ENCODE measurements at regions of chr12 and their contacts with region 1.

Region 1: DNA sequence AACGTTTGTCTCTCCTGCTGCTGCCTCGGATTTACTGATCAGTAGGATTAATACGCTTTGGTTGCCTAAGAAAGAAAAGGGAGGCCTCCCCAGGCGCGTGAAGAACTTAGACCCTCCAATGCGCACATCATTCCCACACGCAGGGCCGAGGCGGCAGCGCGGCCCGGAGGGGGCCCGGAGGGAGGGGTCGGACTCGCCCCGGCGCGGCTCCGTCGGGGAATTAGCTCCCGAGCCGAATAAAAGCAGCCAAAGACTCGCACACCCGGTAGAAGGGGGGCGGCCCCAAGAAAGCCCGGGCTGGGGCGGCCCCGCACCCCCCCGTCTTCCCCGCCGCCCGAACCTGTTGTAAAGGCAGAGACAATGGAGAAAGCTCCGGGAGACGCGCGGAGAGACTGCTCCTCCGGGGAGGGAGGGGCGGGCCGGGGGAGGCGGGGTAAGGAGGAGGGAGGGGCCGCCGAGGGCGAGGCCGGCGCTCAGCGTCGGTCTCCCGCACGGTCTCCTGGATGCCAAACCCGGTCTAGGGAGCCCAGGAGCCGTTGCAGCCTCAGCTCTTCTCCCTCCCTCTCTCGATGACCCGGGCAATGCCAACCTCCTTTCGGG is at the start of gene NELL2:
- DNase-seq: peak; percentile 42 to 79 (median 62)
- ATAC-seq: peak; percentile 70
- H3K4me3 ChIP-seq: peak within 1 kb of the TSS; percentile 82
- H3K4me3 Mint-ChIP-seq: peak within 1 kb of the TSS; percentile 98
- H3K27ac ChIP-seq: peak within 1 kb of the TSS; percentile 1 to 14
- H3K27ac Mint-ChIP-seq: peak within 1 kb of the TSS; percentile 77
- H3K4me1 ChIP-seq: peaks cover 24% of the 10 kb centered on the region
- H3K4me1 Mint-ChIP-seq: peaks cover 44% of the 10 kb centered on the region
- H3K27me3 ChIP-seq: peaks cover 8 to 9% of the 10 kb centered on the region in 2 experiments
- H3K27me3 Mint-ChIP-seq: peaks cover 18% of the 10 kb centered on the region
- CTCF ChIP-seq: no peak
- total RNA-seq, gene NELL2: 142 to 147 TPM

Region 2: GRCh38 chr12:44488180-44488579 is 387.9 kb before region 1 on chr12:
- CTCF ChIA-PET with region 1: no interaction called
- POLR2A ChIA-PET with region 1: no interaction called
- intact Hi-C with region 1: no loop called
- DNase-seq: no peak
- ATAC-seq: no peak
- H3K4me3 ChIP-seq: no peak overlapping the region
- H3K4me3 Mint-ChIP-seq: no peak overlapping the region
- H3K27ac ChIP-seq: no peak overlapping the region
- H3K27ac Mint-ChIP-seq: no peak overlapping the region
- H3K4me1 ChIP-seq: no peaks in the 10 kb centered on the region
- H3K4me1 Mint-ChIP-seq: no peaks in the 10 kb centered on the region
- H3K27me3 ChIP-seq: no peaks in the 10 kb centered on the region
- H3K27me3 Mint-ChIP-seq: peaks cover 24% of the 10 kb centered on the region
- CTCF ChIP-seq: no peak

Region 3: DNA sequence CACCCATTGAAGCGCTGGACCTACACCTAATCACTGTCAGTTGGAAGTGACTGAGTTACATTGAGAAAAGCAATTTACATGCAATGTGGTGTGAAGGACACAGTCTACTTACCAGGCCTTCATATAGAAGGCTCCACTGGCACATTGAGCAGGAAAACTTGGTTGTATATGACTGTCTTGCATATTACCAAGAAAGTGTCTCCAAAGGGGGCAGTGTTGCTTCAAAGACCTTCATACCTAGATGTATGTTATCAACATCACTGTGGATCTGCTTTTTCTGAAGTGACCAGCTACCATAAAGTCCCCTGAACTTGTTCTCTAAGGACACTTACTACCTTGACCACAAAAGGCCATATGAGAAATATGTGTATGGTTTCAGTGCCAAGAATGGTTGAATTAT is 64.0 kb before region 1 on chr12:
- CTCF ChIA-PET with region 1: interaction called, 81 read pairs
- POLR2A ChIA-PET with region 1: interaction called, 42 read pairs
- intact Hi-C with region 1: loop called (anchors 1 to 2 kb)
- DNase-seq: peak in 10 of 14 experiments; percentile 14 to 81 (median 38)
- ATAC-seq: peak; percentile 86
- H3K4me3 ChIP-seq: no peak overlapping the region
- H3K4me3 Mint-ChIP-seq: no peak overlapping the region
- H3K27ac ChIP-seq: no peak overlapping the region
- H3K27ac Mint-ChIP-seq: no peak overlapping the region
- H3K4me1 ChIP-seq: peaks cover 7% of the 10 kb centered on the region
- H3K4me1 Mint-ChIP-seq: peaks cover 47% of the 10 kb centered on the region
- H3K27me3 ChIP-seq: no peaks in the 10 kb centered on the region
- H3K27me3 Mint-ChIP-seq: no peaks in the 10 kb centered on the region
- CTCF ChIP-seq: peak; percentile 68

Region 4: DNA sequence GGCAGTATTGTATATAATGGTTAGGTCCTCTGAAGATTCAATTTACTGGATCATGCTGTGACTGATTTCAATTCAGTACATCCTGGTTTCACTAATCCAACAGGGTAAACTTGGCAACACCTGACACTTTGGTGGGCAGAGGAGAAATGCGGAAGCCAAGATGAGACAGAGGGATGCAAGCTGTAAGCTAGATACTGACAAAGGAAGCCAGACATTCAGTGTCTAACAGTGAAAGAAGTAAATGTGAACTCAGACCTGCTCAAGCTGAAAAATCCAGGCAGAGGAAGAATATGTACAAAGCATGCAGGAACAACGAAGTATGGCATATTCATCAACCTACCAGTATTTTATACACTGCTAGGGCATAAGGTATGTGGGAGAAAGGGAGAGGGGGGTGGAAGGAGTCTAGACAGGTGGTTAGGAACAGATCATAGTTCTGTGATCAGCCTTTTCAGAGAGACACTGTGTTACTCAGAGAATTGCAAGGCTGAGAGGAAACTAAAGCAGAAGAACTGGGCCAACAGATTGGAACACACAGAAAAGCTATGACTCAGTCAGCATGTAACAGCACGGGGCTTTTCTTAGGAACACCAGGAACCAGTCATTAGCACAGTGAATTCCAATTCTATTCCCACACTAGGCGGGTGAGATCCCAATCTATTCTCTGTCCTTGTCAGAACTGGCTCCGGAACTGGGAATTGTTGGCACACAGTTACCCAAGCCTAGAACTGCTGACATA is 40.2 kb before region 1 on chr12:
- CTCF ChIA-PET with region 1: interaction called, 24 read pairs
- POLR2A ChIA-PET with region 1: interaction called, 7 read pairs
- intact Hi-C with region 1: no loop called
- DNase-seq: peak in 5 of 14 experiments; percentile 16 to 54 (median 43)
- ATAC-seq: peak; percentile 94
- H3K4me3 ChIP-seq: peak overlapping the region; percentile 9
- H3K4me3 Mint-ChIP-seq: peak overlapping the region; percentile 57
- H3K27ac ChIP-seq: peak overlapping the region; percentile 56 to 59
- H3K27ac Mint-ChIP-seq: peak overlapping the region; percentile 91
- H3K4me1 ChIP-seq: peaks cover 37% of the 10 kb centered on the region
- H3K4me1 Mint-ChIP-seq: peaks cover 82% of the 10 kb centered on the region
- H3K27me3 ChIP-seq: no peaks in the 10 kb centered on the region
- H3K27me3 Mint-ChIP-seq: no peaks in the 10 kb centered on the region
- CTCF ChIP-seq: no peak

Region 5: DNA sequence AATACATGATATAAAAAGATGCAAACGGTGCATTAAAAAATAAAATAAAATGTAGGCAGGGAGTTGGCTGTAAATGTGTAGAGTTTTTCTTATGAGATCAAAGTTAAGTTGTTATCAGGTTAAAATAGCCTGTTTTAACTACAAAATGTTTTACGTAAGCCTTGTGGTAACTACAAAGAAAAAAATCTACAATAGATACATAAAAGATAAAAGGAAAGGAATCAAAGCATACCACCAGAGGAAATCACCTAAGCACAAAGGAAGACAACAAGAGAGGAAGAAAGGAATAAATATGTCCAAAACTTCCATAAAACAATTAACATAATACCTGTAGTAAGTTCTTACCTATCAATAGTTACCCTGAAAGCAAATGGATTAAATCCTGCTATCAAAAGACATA is 12.2 kb before region 1 on chr12:
- CTCF ChIA-PET with region 1: interaction called, 5 read pairs
- POLR2A ChIA-PET with region 1: interaction called, 40 read pairs
- intact Hi-C with region 1: no loop called
- DNase-seq: peak in 3 of 14 experiments; percentile 57 to 78 (median 68)
- ATAC-seq: peak; percentile 82
- H3K4me3 ChIP-seq: no peak overlapping the region
- H3K4me3 Mint-ChIP-seq: peak overlapping the region; percentile 13
- H3K27ac ChIP-seq: no peak overlapping the region
- H3K27ac Mint-ChIP-seq: peak overlapping the region; percentile 64
- H3K4me1 ChIP-seq: peaks cover 7% of the 10 kb centered on the region
- H3K4me1 Mint-ChIP-seq: peaks cover 34% of the 10 kb centered on the region
- H3K27me3 ChIP-seq: no peaks in the 10 kb centered on the region
- H3K27me3 Mint-ChIP-seq: no peaks in the 10 kb centered on the region
- CTCF ChIP-seq: no peak

Region 6: DNA sequence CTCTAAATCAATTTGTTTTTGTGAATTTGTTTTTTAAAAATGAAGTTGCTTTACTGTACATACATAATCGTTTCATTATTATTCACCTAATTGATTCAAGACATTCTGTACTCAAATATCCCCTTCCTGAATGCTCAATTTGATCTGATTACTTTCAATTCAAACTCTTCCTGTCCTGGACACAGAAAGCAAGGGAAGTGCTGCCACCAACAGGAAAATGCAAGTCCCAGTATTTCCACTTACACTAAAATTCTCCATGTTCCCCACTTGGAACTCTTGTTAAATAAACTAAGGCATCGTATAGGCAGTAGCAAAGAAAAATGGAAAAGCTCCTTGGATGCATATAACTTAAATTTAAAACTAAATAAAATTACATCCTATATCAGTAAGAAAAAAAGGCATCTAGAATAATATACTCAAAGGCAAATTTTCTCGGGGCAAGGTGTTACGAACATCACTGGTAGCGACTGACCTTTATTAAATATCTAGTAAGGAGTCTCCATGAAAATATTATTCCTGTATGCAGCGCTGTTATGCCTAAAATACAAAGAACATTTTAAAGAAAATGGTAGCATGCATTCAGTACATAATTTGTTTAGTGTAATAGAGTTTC is 246.8 kb after region 1 on chr12:
- CTCF ChIA-PET with region 1: no interaction called
- POLR2A ChIA-PET with region 1: no interaction called
- intact Hi-C with region 1: no loop called
- DNase-seq: no peak
- ATAC-seq: no peak
- H3K4me3 ChIP-seq: no peak overlapping the region
- H3K4me3 Mint-ChIP-seq: no peak overlapping the region
- H3K27ac ChIP-seq: no peak overlapping the region
- H3K27ac Mint-ChIP-seq: no peak overlapping the region
- H3K4me1 ChIP-seq: no peaks in the 10 kb centered on the region
- H3K4me1 Mint-ChIP-seq: no peaks in the 10 kb centered on the region
- H3K27me3 ChIP-seq: no peaks in the 10 kb centered on the region
- H3K27me3 Mint-ChIP-seq: no peaks in the 10 kb centered on the region
- CTCF ChIP-seq: no peak